Natural killer cell (primary cell): ENCODE measurements at regions of chr21 and their contacts with region 1.

Region 1: GRCh38 chr21:31098576-31099005 is 60.3 kb upstream of the KRTAP19-8 start:
- DNase-seq: peak; percentile 55 to 86
- ATAC-seq: peak in 2 of 3 donors; percentile 58 to 90
- H3K4me3 ChIP-seq: no peak overlapping the region
- H3K4me3 Mint-ChIP-seq: no peak overlapping the region
- H3K27ac ChIP-seq: no peak overlapping the region
- H3K27ac Mint-ChIP-seq: no peak overlapping the region
- H3K4me1 ChIP-seq: peaks cover 9% of the 10 kb centered on the region
- H3K4me1 Mint-ChIP-seq: peaks cover 9 to 19% of the 10 kb centered on the region in 2 donors
- H3K27me3 ChIP-seq: peaks cover 9% of the 10 kb centered on the region
- H3K27me3 Mint-ChIP-seq: peaks cover 9 to 24% of the 10 kb centered on the region in 2 donors
- CTCF ChIP-seq: peak; percentile 79

Region 2: GRCh38 chr21:31012133-31013089 is 86.2 kb before region 1 on chr21:
- intact Hi-C with region 1: no loop called
- DNase-seq: peak in 1 of 2 donors; percentile 17
- ATAC-seq: no peak
- H3K4me3 ChIP-seq: no peak overlapping the region
- H3K4me3 Mint-ChIP-seq: peak overlapping the region; percentile 4
- H3K27ac ChIP-seq: peak overlapping the region; percentile 31
- H3K27ac Mint-ChIP-seq: peak overlapping the region; percentile 17 to 29
- H3K4me1 ChIP-seq: peaks cover 13% of the 10 kb centered on the region
- H3K4me1 Mint-ChIP-seq: peaks cover 19 to 30% of the 10 kb centered on the region in 2 donors
- H3K27me3 ChIP-seq: no peaks in the 10 kb centered on the region
- H3K27me3 Mint-ChIP-seq: peaks cover 0 to 5% of the 10 kb centered on the region in 2 donors
- CTCF ChIP-seq: no peak

Region 3: GRCh38 chr21:31180256-31181081 is 81.9 kb after region 1 on chr21:
- intact Hi-C with region 1: loop called (anchors 1 kb)
- DNase-seq: peak in 1 of 2 donors; percentile 77
- ATAC-seq: no peak
- H3K4me3 ChIP-seq: no peak overlapping the region
- H3K4me3 Mint-ChIP-seq: no peak overlapping the region
- H3K27ac ChIP-seq: no peak overlapping the region
- H3K27ac Mint-ChIP-seq: no peak overlapping the region
- H3K4me1 ChIP-seq: peaks cover 5% of the 10 kb centered on the region
- H3K4me1 Mint-ChIP-seq: no peaks in the 10 kb centered on the region
- H3K27me3 ChIP-seq: no peaks in the 10 kb centered on the region
- H3K27me3 Mint-ChIP-seq: no peaks in the 10 kb centered on the region
- CTCF ChIP-seq: peak; percentile 29

Region 4: DNA sequence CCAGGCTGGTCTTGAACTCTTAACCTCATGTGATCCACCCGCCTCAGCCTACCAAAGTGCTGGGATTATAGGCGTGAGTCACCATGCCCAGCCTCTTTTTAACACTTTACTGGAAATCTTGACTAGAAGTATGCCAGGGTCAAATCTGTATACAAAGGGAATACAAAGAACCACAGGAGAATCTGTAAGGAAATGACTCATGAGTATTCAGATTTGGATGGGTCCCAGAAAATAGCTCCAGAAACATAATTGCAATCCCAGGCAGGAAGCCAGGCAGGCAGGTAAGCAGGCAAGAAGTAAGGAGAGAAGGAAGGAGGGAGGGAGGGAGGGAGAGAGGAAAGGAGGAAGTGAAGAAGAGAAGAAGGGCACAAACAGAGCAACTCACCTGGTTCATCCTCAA is 268.2 kb after region 1 on chr21:
- intact Hi-C with region 1: no loop called
- DNase-seq: no peak
- ATAC-seq: no peak
- H3K4me3 ChIP-seq: no peak overlapping the region
- H3K4me3 Mint-ChIP-seq: no peak overlapping the region
- H3K27ac ChIP-seq: no peak overlapping the region
- H3K27ac Mint-ChIP-seq: no peak overlapping the region
- H3K4me1 ChIP-seq: peaks cover 24% of the 10 kb centered on the region
- H3K4me1 Mint-ChIP-seq: peaks cover 20 to 22% of the 10 kb centered on the region in 2 donors
- H3K27me3 ChIP-seq: no peaks in the 10 kb centered on the region
- H3K27me3 Mint-ChIP-seq: no peaks in the 10 kb centered on the region
- CTCF ChIP-seq: no peak

Region 5: DNA sequence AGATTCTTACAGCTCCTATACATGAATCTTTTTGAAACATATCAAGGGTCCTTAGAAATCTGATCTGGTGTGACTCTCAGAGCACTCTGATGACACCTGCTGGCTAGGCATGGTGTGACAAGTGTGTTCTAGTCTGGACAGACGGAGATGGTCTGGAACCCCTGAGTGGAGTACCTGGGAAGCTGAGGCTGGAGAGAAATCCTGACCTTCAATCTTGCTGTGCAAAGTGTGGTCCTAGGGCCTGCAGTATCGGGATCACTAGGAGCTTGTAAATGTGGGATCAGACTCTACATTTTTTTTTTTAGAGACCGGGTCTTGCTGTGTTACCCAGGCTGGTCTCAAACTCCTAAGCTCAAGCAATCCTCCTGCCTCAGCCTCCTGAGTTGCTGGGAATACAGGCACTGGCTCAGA is 482.3 kb after region 1 on chr21:
- intact Hi-C with region 1: loop called (anchors 1 kb)
- DNase-seq: peak; percentile 61 to 85
- ATAC-seq: peak; percentile 77 to 95 (median 88)
- H3K4me3 ChIP-seq: no peak overlapping the region
- H3K4me3 Mint-ChIP-seq: no peak overlapping the region
- H3K27ac ChIP-seq: no peak overlapping the region
- H3K27ac Mint-ChIP-seq: no peak overlapping the region
- H3K4me1 ChIP-seq: no peaks in the 10 kb centered on the region
- H3K4me1 Mint-ChIP-seq: no peaks in the 10 kb centered on the region
- H3K27me3 ChIP-seq: no peaks in the 10 kb centered on the region
- H3K27me3 Mint-ChIP-seq: peaks cover 0 to 3% of the 10 kb centered on the region in 2 donors
- CTCF ChIP-seq: peak; percentile 92

Region 6: GRCh38 chr21:31604591-31605190 is 506.1 kb after region 1 on chr21:
- intact Hi-C with region 1: loop called (anchors 1 kb)
- DNase-seq: peak; percentile 48 to 88
- ATAC-seq: peak; percentile 61 to 76 (median 68)
- H3K4me3 ChIP-seq: no peak overlapping the region
- H3K4me3 Mint-ChIP-seq: no peak overlapping the region
- H3K27ac ChIP-seq: no peak overlapping the region
- H3K27ac Mint-ChIP-seq: no peak overlapping the region
- H3K4me1 ChIP-seq: peaks cover 2% of the 10 kb centered on the region
- H3K4me1 Mint-ChIP-seq: no peaks in the 10 kb centered on the region
- H3K27me3 ChIP-seq: peaks cover 2% of the 10 kb centered on the region
- H3K27me3 Mint-ChIP-seq: peaks cover 0 to 4% of the 10 kb centered on the region in 2 donors
- CTCF ChIP-seq: peak; percentile 95